Ascending aorta (tissue), 2 donors: ENCODE measurements at regions of chr19 and their contacts with region 1.

Region 1: GRCh38 chr19:43503501-43504425 is 783 bp downstream of the PHLDB3 start:
- DNase-seq: peak; percentile 90 to 98
- H3K4me3 ChIP-seq: peak overlapping the region; percentile 75 to 78
- H3K27ac ChIP-seq: peak overlapping the region; percentile 87
- H3K4me1 ChIP-seq: peaks cover 3 to 8% of the 10 kb centered on the region in 2 donors
- H3K27me3 ChIP-seq: no peaks in the 10 kb centered on the region
- CTCF ChIP-seq: peak in 2 of 3 experiments; percentile 17 to 33

Region 2: DNA sequence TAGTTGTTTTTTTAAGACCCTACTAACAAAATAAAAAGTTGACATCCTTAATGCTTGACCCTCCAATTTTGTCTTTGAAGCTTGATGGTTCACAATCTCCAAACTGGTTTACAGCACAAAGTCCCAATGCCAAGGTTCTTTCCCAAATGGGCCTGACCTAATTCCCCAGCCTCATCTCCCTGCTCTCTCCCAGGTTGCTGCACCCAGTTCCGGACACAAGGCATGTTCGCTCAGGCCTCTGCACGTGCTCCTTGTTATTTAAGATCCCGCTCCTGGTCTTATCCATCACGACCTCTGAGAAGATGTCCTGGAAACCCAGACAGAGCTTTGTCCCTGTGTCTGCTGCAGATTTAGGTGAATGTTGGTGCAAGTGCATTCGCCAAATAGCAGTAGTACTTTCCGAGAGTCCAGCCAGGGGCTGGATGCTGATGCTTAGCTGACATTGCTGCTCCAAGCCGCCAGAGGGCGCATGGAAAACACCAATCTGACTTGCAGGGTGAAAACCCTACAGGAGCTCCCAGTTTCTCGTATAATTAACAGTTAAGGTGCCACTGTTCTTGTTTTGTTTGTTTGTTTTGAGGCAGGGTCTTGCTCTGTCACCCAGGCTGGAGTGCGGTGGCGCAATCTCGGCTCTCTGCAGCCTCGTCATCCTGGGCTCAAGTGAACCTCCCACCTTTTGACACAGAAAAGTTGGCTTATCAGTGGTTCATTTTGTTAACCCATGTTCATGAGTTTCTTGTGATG is 56.8 kb before region 1 on chr19:
- intact Hi-C with region 1: loop called (anchors 1 kb)
- DNase-seq: peak; percentile 18 to 76
- H3K4me3 ChIP-seq: no peak overlapping the region
- H3K27ac ChIP-seq: no peak overlapping the region
- H3K4me1 ChIP-seq: no peaks in the 10 kb centered on the region
- H3K27me3 ChIP-seq: no peaks in the 10 kb centered on the region
- CTCF ChIP-seq: peak; percentile 91 to 95 (median 93)

Region 3: GRCh38 chr19:43463381-43464136 is 40.2 kb before region 1 on chr19:
- intact Hi-C with region 1: loop called (anchors 1 kb)
- DNase-seq: peak; percentile 90 to 98
- H3K4me3 ChIP-seq: peak overlapping the region; percentile 58 to 69
- H3K27ac ChIP-seq: peak overlapping the region; percentile 73 to 88
- H3K4me1 ChIP-seq: peaks cover 0 to 8% of the 10 kb centered on the region in 2 donors
- H3K27me3 ChIP-seq: no peaks in the 10 kb centered on the region
- CTCF ChIP-seq: no peak

Region 4: GRCh38 chr19:43474986-43475705 is 28.6 kb before region 1 on chr19:
- intact Hi-C with region 1: loop called (anchors 1 kb)
- DNase-seq: peak; percentile 75 to 96
- H3K4me3 ChIP-seq: peak overlapping the region; percentile 46 to 60
- H3K27ac ChIP-seq: peak overlapping the region; percentile 68 to 76
- H3K4me1 ChIP-seq: peaks cover 0 to 7% of the 10 kb centered on the region in 2 donors
- H3K27me3 ChIP-seq: no peaks in the 10 kb centered on the region
- CTCF ChIP-seq: no peak

Region 5: GRCh38 chr19:43526884-43527859 is 23.4 kb after region 1 on chr19 and contains the start of gene ETHE1:
- intact Hi-C with region 1: loop called (anchors 2 kb)
- DNase-seq: peak; percentile 40 to 92
- H3K4me3 ChIP-seq: peak within 1 kb of the TSS; percentile 76 to 91
- H3K27ac ChIP-seq: peak within 1 kb of the TSS; percentile 82 to 87
- H3K4me1 ChIP-seq: peaks cover 12 to 22% of the 10 kb centered on the region in 2 donors
- H3K27me3 ChIP-seq: no peaks in the 10 kb centered on the region
- CTCF ChIP-seq: no peak
- total RNA-seq, gene ETHE1: 118 TPM